Cardiac septum (tissue), 1 donor: ENCODE measurements at regions of chr11 and their contacts with region 1.

Region 1: GRCh38 chr11:20048211-20048610 is 112.1 kb downstream of the DBX1 start:
- DNase-seq: no peak

Region 2: DNA sequence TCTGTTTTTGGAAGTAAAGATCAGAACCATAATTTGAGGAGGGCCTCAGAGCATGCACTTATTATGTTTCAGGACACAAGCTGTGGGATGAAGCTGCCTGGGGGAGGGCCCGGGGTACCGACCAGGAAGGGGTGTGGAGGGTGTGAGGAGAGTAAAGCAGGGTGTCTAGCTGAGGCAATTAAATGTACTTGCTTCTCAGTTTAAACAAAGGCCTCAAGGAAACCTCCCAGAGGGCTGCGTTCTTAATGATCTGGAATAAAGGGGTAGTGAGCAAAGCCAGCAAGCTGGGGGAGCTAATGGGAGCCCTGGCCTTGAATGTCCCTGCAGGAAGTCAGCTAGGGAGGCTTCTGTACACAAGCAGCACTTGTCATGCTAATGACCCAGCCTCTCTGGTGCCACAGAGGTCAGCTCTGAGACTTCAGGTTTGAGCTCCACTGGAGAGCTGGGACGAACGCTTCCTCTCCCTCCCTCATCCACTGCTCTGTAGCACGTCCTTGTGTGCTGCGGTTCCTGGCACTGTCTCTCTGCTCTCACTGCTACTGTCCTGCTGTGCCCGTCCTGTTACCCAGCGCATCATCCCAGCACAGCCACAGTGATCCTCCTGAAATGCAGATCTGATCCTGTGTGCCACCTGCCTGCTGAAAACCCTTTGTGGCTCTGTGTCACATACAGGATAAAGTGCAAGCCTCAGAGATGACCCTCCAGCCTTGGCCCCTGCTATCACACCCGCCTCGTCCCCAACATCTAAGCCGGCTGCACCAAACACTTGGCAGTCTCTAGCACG is 47.7 kb before region 1 on chr11:
- intact Hi-C with region 1: loop called (anchors 2 kb)
- DNase-seq: no peak

Region 3: GRCh38 chr11:20075627-20076026 is 27.4 kb after region 1 on chr11:
- intact Hi-C with region 1: no loop called
- DNase-seq: no peak

Region 4: GRCh38 chr11:20089796-20090653 is 41.8 kb after region 1 on chr11:
- intact Hi-C with region 1: loop called (anchors 5 kb)
- DNase-seq: no peak

Region 5: DNA sequence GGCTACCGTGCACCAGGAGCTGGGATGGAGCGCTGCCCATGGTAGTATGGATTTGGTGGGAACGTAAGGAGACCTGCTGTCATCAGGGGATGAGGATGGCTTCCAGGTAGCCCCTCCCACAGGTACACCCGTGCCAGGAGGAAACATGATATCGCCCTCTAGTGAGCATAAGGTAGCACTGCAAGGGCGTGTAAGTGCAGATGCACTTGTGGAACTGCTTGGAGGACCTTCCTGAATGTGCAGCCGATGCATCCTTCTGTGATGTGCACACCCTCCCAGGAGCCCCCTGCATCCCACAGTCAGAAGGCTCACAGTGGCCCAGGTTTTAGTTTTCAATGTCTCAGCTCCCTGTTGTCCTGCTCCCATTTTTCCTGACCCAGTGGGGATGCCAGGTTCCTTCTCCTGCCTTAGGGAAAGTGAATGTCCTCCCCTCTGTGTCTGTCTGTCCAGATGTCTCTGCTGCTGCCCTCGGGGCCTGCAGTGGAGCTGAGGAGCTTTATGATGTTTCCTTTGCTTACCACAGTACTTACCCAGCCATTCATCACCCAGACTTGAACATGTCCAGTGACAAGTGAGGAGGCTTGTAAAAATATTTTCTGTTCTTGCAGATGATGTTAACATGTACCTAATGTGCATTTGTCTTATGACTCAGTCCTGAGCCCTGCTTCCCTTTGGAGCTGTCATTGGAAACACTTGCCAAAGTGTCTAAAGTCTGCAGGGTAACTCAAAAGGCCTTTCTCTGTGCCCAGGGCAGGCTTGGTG is 62.9 kb after region 1 on chr11:
- intact Hi-C with region 1: loop called (anchors 5 kb)
- DNase-seq: no peak